Left cardiac atrium (tissue), 4 donors: ENCODE measurements at regions of chr21 and their contacts with region 1.

Region 1: GRCh38 chr21:35113064-35113463 is 64.0 kb upstream of the RUNX1 start:
- DNase-seq: no peak
- ATAC-seq: no peak

Region 2: DNA sequence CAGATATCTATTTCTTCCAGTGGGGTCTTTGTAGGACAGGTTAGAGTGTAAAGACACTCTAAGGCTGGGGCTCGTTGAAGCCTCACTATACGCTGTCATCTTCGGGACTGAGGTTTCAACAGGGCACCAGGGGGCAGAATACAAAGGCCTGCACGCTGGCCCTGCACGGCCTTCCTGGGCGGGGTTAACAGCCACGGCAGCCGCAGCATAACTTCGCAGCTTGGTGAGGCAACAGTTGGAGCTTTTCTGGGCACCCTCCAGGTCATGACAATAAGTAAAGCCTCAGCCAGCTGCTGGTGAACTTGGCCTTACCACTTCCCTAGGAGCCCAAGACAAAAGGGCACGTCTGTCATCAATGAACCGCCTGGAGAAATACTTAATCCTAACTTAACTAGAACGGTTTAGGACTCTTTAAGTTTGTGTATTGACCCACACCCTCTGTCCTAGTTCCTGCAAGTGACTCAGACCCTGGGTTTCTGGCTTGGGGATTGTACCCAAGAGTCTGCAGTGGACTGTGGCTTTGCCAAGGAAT is 61.7 kb before region 1 on chr21:
- intact Hi-C with region 1: no loop called
- DNase-seq: peak; percentile 91
- ATAC-seq: peak; percentile 88

Region 3: GRCh38 chr21:35189077-35189863 is 76.2 kb after region 1 on chr21:
- intact Hi-C with region 1: loop called in 1 of 2 experiments (anchors 10 kb)
- DNase-seq: no peak
- ATAC-seq: peak; percentile 12 to 90

Region 4: DNA sequence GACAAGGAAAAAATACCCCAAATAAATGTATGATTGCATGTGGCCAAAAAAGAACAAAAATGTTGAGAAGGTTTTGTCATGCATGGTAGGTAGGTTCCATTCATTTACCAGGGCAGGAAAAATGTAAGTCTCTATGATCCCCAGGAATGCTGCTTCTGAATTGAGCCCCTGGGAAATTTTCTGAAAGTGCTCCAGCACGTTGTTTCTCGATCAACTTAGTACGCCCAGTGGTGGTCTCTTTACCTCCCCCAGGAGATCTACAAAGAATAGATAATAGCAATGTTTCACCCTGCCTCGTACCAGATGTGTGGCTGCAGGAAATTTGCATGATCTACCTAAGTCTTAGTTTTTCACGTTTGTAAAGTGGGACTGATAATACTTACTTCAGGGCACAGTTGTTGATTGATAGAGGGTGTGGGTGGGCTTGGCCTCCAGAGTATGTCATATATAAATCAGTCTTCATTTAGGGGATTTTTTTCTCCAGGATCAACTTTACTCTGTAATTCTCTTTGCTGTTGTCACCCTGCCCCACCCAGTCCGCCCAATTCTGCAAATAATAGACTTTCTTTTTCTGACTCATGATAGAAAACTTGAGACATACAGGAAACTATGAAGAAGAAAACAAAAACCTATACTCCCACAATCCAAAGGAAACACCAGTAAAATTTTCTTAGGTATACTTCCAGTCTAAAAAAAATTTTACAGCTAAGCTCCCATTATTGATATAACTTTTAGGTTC is 398.1 kb after region 1 on chr21:
- intact Hi-C with region 1: no loop called
- DNase-seq: no peak
- ATAC-seq: no peak